PC-9 (cell line): ENCODE measurements at regions of chr2 and their contacts with region 1.

Region 1: DNA sequence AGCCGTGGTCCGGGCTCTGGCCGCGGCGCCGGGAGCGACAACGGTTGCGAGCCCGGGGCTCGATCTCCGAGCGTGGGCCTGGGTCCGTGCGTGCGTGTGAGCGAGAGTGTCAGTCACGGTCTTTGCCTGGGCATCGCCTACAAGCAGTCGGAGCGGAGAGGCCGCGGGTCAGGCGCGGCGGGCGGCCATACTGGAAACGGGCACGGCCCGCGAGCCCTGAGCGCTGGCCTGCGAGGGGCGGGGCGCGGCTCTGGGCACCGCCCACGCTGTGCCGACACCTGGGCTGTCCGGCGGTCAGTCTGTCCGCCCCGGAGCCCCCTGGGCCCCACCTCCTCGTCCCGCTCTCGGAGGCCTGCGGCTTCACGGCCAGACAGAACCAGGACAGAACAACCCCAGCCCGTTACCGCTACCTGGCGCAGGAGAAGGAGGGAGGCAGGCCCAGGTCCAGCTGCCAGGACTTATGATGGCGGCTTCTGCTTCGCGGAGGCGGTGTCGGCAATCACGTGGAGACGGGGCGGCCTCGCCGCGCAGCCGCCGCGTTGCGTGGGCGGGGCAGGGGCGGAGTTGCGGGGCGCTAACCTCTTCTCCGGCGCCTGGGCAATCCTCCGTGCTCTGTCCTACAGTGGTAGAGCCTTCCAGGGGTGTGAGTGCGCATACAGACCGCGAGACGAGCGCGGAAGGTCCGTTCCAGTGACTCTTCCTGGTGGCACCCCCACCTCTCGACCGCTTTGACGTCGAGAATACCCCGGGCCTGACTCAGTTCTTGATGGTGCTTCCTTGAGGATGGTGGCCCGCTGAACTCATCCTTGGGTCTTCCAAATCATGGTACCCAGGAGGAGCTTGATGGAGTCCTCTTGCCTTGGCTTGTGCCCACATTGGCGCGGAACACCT is at the start of gene TMEM131:
- DNase-seq: peak; percentile 84 to 97
- H3K4me3 ChIP-seq: peak within 1 kb of the TSS; percentile 98
- H3K27ac ChIP-seq: peak within 1 kb of the TSS; percentile 80
- H3K4me1 ChIP-seq: peaks cover 38% of the 10 kb centered on the region
- H3K27me3 ChIP-seq: no peaks in the 10 kb centered on the region
- CTCF ChIP-seq: no peak
- total RNA-seq, gene TMEM131: 22.8 and 29.6 TPM in 2 replicates

Region 2: DNA sequence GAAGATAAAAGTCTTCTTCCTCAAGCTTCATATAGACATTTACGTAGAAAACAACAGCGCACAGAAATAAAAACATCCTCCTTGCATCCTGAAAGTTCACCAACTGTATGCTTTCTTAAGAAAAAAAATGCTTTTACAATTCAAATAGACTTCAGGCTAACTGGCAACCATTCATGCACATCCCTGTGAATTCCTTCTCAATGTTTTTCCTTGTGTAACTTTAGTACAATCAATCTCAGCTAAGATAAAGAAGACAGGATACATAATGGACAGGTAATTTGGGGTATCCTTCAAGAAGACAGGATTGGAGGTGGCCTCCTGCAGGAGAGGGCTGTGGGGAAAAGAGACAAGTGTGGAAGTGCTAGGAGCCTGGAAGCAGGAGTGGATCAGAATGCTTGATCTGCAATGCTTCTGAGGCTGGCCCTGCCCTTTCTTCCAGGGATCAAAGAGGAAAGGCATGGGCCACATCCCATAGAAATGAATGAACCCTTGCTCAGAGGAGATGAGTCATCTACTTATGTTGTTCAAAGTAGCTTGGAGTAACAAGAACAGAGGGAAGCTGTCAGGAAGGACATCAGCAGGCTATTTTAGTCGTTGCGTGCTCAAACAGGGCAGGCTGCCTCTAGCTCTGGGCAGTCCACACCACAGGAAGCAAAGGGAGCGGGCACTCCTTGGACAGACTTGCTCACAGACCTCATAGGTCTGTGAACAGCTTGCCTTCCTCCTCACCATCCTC is 126.8 kb before region 1 on chr2:
- CTCF ChIA-PET with region 1: no interaction called
- POLR2A ChIA-PET with region 1: interaction called, 3 read pairs
- intact Hi-C with region 1: loop called (anchors 1 kb)
- DNase-seq: peak; percentile 71 to 97
- H3K4me3 ChIP-seq: peak overlapping the region; percentile 19; the same call in 1 of the 2 replicates
- H3K27ac ChIP-seq: peak overlapping the region; percentile 88
- H3K4me1 ChIP-seq: peaks cover 52% of the 10 kb centered on the region
- H3K27me3 ChIP-seq: no peaks in the 10 kb centered on the region
- CTCF ChIP-seq: no peak

Region 3: GRCh38 chr2:97950329-97951154 is 45.4 kb before region 1 on chr2:
- CTCF ChIA-PET with region 1: no interaction called
- POLR2A ChIA-PET with region 1: interaction called, 4 read pairs
- intact Hi-C with region 1: loop called (anchors 5 kb)
- DNase-seq: peak; percentile 35 to 88
- H3K4me3 ChIP-seq: no peak overlapping the region; the same call in 1 of the 2 replicates
- H3K27ac ChIP-seq: peak overlapping the region; percentile 56
- H3K4me1 ChIP-seq: peaks cover 30% of the 10 kb centered on the region
- H3K27me3 ChIP-seq: no peaks in the 10 kb centered on the region
- CTCF ChIP-seq: no peak

Region 4: DNA sequence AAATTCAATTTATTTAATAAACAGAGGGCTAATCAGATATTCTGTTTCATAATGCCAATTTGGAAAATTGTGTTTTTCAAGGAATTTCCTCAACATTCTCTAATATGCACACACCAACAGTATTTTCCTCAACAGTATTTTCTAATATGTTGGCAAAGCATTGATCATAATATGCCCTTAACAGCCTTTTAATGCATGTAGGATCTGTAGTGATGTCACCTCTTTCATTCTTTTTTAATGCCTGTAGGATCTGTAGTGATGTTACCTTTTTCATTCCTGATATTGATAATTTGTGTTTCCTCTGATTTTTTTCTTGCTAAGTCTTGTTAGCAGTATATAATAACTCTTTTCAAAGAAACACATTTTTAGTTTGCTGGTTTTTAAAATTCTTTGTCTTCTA is 106.9 kb after region 1 on chr2:
- CTCF ChIA-PET with region 1: no interaction called
- POLR2A ChIA-PET with region 1: interaction called, 10 read pairs
- intact Hi-C with region 1: no loop called
- DNase-seq: no peak
- H3K4me3 ChIP-seq: no peak overlapping the region
- H3K27ac ChIP-seq: no peak overlapping the region
- H3K4me1 ChIP-seq: no peaks in the 10 kb centered on the region
- H3K27me3 ChIP-seq: no peaks in the 10 kb centered on the region
- CTCF ChIP-seq: no peak